Gastrocnemius medialis (tissue), 4 donors: ENCODE measurements at regions of chr12 and their contacts with region 1.

Region 1: DNA sequence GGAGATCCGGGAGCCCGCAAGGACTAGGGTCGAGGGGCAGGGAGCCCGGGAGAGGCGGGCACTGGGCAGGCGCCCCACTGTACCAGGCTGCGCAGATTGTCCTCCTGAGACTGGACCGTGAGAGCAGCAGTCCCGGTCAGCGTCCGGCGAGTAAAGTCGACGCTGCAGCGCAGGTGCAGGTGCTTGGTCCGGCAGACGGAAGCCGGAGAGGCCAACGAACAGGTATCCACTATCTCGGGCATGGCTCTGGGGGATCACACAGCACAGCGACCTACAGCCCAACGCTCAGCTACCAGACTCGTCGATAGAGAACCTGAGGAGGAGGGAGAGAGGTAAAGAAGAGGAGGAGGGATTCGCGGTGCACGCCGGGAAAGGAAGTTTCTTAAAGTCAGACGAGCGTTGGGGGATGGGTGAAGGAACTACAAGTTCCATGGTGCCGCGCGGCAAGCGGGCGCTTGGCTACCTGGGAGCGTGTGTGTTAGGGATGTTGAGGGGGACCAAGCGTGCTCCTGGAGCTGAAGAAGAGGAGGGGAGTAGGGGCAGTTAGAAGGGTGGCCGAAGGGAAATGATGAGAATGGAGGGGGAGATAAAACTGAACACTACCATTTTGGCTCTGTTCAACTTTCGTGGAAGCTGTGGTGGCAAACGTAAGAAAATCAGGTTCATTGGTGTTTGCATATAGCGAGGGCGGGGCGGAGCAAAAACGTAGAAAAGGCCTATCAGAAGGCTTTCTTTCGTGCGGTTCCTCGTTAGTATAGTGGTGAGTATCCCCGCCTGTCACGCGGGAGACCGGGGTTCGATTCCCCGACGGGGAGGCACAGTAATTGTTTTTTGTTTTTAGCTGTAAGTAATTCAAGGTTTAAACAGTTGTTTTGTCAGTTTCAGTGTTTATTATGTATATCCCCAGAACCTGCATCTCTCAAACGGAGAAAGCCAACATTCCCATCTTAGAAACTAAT is at the start of gene LTA4H:
- DNase-seq: peak; percentile 94 to 96
- ATAC-seq: peak; percentile 96 to 98
- H3K4me3 ChIP-seq: peak within 1 kb of the TSS; percentile 69 to 97 (median 89)
- H3K27ac ChIP-seq: peak within 1 kb of the TSS; percentile 80 to 90 (median 84)
- H3K4me1 ChIP-seq: peaks cover 15 to 18% of the 10 kb centered on the region in 2 donors
- H3K27me3 ChIP-seq: no peaks in the 10 kb centered on the region
- CTCF ChIP-seq: no peak
- POLR2A ChIP-seq: peak; percentile 58 to 76
- total RNA-seq, gene LTA4H: 36.7 to 46.9 (median 40.6) TPM

Region 2: DNA sequence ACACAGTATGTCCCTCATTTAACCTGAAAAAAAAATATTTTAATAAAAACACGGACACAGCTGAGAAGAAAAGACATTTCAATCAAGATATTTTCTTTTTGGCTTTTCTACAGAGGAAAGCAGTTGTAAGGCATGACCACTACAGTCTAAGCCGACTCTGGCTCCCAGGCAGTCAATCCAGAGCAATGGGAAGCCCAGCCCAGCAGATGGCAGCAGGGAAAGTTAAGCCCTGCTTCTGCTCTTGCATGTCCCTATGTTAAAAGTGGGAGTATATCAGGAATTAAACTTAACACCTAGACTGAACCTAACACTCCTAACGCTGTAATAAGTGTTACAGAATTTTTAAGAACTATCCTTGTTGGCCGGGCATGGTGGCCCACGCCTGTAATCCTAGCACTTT is 19.9 kb before region 1 on chr12:
- in situ Hi-C with region 1: no loop called
- intact Hi-C with region 1: loop called (anchors 1 kb)
- DNase-seq: peak in 1 of 2 donors; percentile 30
- ATAC-seq: peak in 1 of 2 donors; percentile 68
- H3K4me3 ChIP-seq: no peak overlapping the region
- H3K27ac ChIP-seq: peak overlapping the region; percentile 42 to 70 (median 63)
- H3K4me1 ChIP-seq: peaks cover 13 to 18% of the 10 kb centered on the region in 2 donors
- H3K27me3 ChIP-seq: no peaks in the 10 kb centered on the region
- CTCF ChIP-seq: peak in 2 of 5 experiments; percentile 29 to 30
- POLR2A ChIP-seq: no peak

Region 3: DNA sequence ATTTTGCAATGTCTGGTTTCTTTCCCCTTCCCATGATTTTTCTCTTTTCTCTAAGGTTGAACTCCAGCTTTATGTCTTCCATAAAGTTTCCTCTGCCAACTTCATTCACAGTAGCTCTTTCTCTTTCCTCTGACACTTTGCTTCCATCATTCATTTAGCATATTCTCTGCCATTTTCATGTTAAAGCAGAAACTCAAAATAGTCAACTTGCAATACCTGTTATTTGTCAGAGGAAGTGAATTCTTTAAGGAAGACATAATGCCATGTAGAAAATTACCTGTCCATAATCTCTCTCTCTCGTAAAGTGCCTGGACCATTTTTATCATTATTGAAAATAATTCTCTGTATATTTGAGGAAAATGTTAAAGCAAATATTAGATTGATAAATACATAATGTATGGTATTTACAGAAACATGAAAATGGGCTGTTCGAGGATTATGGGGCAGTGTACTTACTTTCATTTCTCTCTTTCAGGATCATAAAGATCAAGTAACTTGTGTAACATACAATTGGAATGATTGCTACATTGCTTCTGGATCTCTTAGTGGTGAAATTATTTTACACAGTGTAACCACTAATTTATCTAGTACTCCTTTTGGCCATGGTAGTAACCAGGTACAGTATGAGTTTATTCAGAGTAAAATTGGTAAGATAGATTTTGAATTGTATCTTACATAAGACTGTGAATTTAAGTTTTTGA is 884.1 kb after region 1 on chr12:
- in situ Hi-C with region 1: no loop called
- intact Hi-C with region 1: loop called (anchors 10 kb)
- DNase-seq: no peak
- ATAC-seq: no peak
- H3K4me3 ChIP-seq: no peak overlapping the region
- H3K27ac ChIP-seq: no peak overlapping the region
- H3K4me1 ChIP-seq: no peaks in the 10 kb centered on the region
- H3K27me3 ChIP-seq: no peaks in the 10 kb centered on the region
- CTCF ChIP-seq: no peak
- POLR2A ChIP-seq: no peak